Pancreas (tissue), 10 donors: ENCODE measurements at regions of chr1 and their contacts with region 1.

Region 1: GRCh38 chr1:41416552-41417334 is 55.5 kb downstream of the FOXO6 start:
- DNase-seq: peak; percentile 43 to 89 (median 76)
- ATAC-seq: peak; percentile 72 to 84 (median 81)
- H3K4me3 ChIP-seq: no peak overlapping the region
- H3K27ac ChIP-seq: no peak overlapping the region
- H3K4me1 ChIP-seq: no peaks in the 10 kb centered on the region
- H3K27me3 ChIP-seq: no peaks in the 10 kb centered on the region
- CTCF ChIP-seq: peak; percentile 80 to 89 (median 85)

Region 2: GRCh38 chr1:41268154-41268770 is 148.5 kb before region 1 on chr1:
- intact Hi-C with region 1: loop called (anchors 5 to 10 kb)
- DNase-seq: peak; percentile 64 to 90 (median 82)
- ATAC-seq: peak; percentile 94 to 99 (median 97)
- H3K4me3 ChIP-seq: no peak overlapping the region
- H3K27ac ChIP-seq: no peak overlapping the region
- H3K4me1 ChIP-seq: no peaks in the 10 kb centered on the region
- H3K27me3 ChIP-seq: no peaks in the 10 kb centered on the region
- CTCF ChIP-seq: peak; percentile 90 to 98 (median 98)

Region 3: DNA sequence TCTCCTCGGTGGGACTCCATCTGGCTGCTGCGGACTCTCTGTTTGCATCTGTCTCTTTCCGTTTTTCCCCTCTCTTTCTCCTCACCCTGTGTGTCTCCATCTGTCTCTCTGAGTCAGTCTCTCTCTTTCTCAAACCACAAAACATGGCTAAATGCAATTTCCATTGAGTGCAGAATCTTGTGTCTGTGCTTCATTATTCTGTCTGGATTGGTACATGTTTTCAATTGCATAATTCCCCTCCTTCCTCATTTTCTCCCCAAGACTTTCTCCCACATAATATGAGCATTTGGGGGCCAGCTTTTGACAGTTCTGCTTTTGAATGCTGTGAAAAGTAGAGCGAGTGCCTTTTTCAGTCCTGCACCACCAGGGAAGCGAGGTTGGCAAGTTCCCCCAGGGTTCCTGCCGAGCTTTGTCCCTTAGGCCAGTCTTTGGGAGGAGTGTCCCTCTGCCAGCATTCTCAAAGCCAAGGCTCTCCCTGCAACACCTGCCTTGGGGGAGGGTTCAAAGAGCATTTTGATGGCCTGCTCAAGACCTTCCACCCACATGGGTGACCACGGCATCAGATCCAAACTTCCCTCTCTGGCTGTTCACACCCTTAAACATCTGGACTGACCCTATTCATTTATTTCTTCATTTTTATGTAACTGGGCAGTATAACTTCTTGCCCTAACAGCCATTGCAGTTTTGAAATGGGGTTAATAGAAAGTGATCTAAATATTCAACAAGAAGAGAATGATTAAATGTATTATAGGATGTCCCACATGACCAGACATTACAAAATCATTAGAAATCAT is 141.8 kb before region 1 on chr1:
- intact Hi-C with region 1: loop called in 2 of 3 experiments (anchors 5 to 10 kb)
- DNase-seq: no peak
- ATAC-seq: peak in 2 of 4 donors; percentile 15 to 52
- H3K4me3 ChIP-seq: no peak overlapping the region
- H3K27ac ChIP-seq: no peak overlapping the region
- H3K4me1 ChIP-seq: no peaks in the 10 kb centered on the region
- H3K27me3 ChIP-seq: no peaks in the 10 kb centered on the region
- CTCF ChIP-seq: no peak

Region 4: GRCh38 chr1:41282679-41283317 is 133.9 kb before region 1 on chr1:
- intact Hi-C with region 1: loop called in 2 of 3 experiments (anchors 5 to 10 kb)
- DNase-seq: peak in 4 of 6 donors; percentile 14 to 71 (median 44)
- ATAC-seq: peak; percentile 61 to 88 (median 83)
- H3K4me3 ChIP-seq: no peak overlapping the region
- H3K27ac ChIP-seq: no peak overlapping the region
- H3K4me1 ChIP-seq: no peaks in the 10 kb centered on the region
- H3K27me3 ChIP-seq: no peaks in the 10 kb centered on the region
- CTCF ChIP-seq: peak; percentile 51 to 77 (median 64)

Region 5: DNA sequence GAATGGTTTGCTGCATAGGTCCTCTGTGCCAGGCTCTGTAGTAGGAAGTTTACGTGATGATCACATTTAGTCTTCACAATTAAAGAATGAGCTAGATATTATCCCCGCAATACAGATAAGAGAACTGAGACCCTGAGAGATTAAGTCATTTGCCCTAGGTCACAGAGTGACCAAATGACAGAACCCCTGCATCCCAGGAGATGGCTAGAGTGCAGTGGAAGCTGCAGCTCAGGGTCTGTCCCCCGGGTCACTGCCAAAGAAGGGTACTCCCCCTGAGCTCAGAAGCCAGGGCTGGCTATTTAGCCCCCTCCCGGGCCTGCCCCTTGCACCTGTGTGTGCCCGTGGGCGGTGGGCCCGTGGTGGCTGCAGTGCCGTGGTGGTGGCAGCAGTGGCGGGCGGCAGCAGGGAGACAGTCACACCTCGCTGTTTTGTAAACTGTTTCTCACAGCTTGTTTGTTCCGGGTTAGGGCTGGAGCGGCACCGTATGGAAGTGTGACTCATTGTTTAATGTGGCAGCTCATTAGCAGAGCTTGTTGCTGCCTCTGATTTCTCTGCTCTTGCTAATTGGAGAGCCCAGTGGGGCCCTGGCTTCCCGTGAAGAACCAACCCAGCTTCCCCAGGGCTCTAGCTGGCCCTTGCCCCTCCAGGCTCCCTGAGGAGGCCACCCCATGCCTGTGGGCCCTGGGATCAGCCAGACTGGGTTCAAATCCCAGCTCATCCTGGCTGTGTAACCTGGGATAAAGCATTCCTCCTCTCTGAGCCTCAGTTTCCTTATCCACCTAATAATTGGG is 74.8 kb before region 1 on chr1:
- intact Hi-C with region 1: no loop called
- DNase-seq: peak in 5 of 6 donors; percentile 41 to 71 (median 55)
- ATAC-seq: peak; percentile 91 to 97 (median 96)
- H3K4me3 ChIP-seq: peak overlapping the region in 1 of 4 donors; percentile 7
- H3K27ac ChIP-seq: peak overlapping the region in 2 of 4 donors; percentile 55 to 70
- H3K4me1 ChIP-seq: peaks cover 0 to 14% (median 0%) of the 10 kb centered on the region in 3 donors
- H3K27me3 ChIP-seq: no peaks in the 10 kb centered on the region
- CTCF ChIP-seq: no peak

Region 6: DNA sequence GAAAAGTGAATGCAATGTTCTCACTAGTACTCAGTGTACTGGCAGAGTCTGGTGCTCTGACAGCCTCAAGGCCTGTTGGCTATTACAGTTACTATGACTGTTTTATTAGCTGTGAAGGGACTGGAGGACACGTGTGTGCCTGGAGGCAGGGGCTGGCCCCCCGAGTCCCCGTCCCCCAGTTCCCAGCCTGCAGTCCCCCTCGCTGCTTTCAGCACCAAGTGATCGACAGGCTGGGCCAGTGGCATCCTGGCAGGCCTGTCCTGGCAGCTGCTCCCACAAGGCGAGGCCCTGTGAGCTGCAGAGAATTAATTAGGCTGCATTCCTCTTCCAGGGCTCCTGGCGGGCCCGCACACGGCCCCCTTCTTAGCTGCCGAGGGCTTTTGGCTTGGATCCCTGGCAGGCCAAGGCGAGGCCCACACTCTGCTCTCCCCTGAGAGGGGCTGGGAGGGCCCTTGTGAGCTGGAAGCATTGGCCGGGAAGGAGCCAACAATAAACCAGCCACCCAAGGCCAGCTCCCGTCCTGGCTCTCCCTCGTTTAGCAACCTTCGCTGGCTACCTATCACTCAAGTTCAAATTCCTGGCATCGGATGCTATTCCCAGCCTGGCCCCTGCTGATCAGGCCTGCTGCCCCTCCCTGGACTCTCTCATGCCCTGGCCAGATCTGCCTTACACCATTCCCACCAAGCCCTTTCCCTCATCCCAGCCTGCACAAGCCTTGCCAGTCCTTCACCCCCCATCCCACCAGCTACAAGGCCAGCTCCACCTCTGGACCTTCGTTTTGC is 57.9 kb after region 1 on chr1:
- intact Hi-C with region 1: no loop called
- DNase-seq: peak; percentile 61 to 83 (median 68)
- ATAC-seq: peak; percentile 57 to 74 (median 69)
- H3K4me3 ChIP-seq: no peak overlapping the region
- H3K27ac ChIP-seq: peak overlapping the region; percentile 52 to 86 (median 76)
- H3K4me1 ChIP-seq: peaks cover 16 to 37% (median 27%) of the 10 kb centered on the region in 3 donors
- H3K27me3 ChIP-seq: no peaks in the 10 kb centered on the region
- CTCF ChIP-seq: no peak

Region 7: GRCh38 chr1:41496080-41497055 is 79.6 kb after region 1 on chr1:
- intact Hi-C with region 1: no loop called
- DNase-seq: peak in 5 of 6 donors; percentile 78 to 90 (median 84)
- ATAC-seq: peak; percentile 44 to 66 (median 50)
- H3K4me3 ChIP-seq: peak overlapping the region in 2 of 4 donors; percentile 7 to 38
- H3K27ac ChIP-seq: peak overlapping the region; percentile 62 to 77 (median 66)
- H3K4me1 ChIP-seq: peaks cover 18 to 44% (median 25%) of the 10 kb centered on the region in 3 donors
- H3K27me3 ChIP-seq: no peaks in the 10 kb centered on the region
- CTCF ChIP-seq: no peak